Panc1 (cell line): ENCODE measurements at regions of chr12 and their contacts with region 1.

Region 1: DNA sequence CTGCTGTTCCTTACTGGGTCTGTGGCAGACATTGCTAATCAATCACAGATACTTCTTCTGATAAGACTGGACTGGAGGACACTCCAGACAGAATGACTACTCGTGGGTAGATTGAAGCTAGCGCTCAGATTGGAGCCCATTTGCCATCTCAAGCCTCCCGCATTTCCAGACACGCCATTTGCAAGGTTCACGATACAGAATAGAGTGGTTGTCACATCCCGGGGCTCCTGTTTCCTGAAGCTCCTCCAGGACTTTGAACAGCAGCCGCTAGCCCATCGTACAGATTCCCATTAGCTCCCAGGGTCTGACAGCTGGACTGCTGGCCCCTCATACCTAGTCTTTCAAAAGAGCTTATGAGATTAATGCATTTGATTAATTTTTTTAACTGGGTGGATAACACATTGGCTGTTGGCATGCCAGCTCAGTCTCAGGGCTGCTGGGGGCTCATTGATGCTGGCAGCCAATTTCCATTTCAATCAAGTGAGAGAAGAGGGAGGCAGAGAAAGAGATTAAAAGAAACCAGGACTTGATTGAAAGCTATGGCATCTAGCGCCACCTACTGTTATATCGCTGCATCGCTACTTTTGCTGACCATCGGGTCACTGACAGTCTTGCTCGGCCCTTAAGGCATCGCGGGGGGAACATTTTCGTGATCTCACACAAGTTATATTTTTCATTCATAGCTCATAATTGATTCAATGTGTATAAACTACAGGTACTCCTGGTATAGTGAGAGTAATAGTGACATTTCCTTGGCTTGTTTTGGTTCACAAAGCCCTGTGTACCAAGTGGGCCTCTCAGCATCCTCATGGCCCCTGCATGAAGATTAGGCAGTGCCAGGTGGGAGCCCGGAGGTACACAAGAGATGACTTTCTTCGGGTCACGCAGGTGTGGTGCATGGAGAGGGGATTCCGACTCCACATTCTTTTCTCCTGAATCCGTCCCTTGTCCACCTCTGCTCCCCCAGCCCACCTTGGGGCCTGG is 78.6 kb downstream of the CCDC60 start:
- DNase-seq: peak; percentile 61
- ATAC-seq: peak; percentile 90
- H3K4me3 ChIP-seq: no peak overlapping the region
- H3K27ac ChIP-seq: no peak overlapping the region
- H3K4me1 ChIP-seq: no peaks in the 10 kb centered on the region
- H3K27me3 ChIP-seq: peaks cover 8% of the 10 kb centered on the region; the same call in 1 of the 2 replicates
- CTCF ChIP-seq: peak; percentile 93

Region 2: GRCh38 chr12:118979763-118980406 is 433.2 kb before region 1 on chr12:
- CTCF ChIA-PET with region 1: no interaction called
- POLR2A ChIA-PET with region 1: no interaction called
- in situ Hi-C with region 1: no loop called
- intact Hi-C with region 1: loop called (anchors 10 kb)
- DNase-seq: peak; percentile 20
- ATAC-seq: peak; percentile 76; the same call in 1 of the 2 replicates
- H3K4me3 ChIP-seq: no peak overlapping the region
- H3K27ac ChIP-seq: no peak overlapping the region
- H3K4me1 ChIP-seq: no peaks in the 10 kb centered on the region
- H3K27me3 ChIP-seq: no peaks in the 10 kb centered on the region; the same call in 1 of the 2 replicates
- CTCF ChIP-seq: peak; percentile 88

Region 3: GRCh38 chr12:119115296-119115905 is 297.7 kb before region 1 on chr12:
- CTCF ChIA-PET with region 1: interaction called, 4 read pairs
- POLR2A ChIA-PET with region 1: no interaction called
- in situ Hi-C with region 1: no loop called
- intact Hi-C with region 1: loop called (anchors 2 kb)
- DNase-seq: peak; percentile 35
- ATAC-seq: 0 out of 2 replicates have a peak, but pooled peaks have one; percentile 56
- H3K4me3 ChIP-seq: no peak overlapping the region
- H3K27ac ChIP-seq: no peak overlapping the region
- H3K4me1 ChIP-seq: no peaks in the 10 kb centered on the region
- H3K27me3 ChIP-seq: no peaks in the 10 kb centered on the region; the same call in 1 of the 2 replicates
- CTCF ChIP-seq: peak; percentile 93

Region 4: DNA sequence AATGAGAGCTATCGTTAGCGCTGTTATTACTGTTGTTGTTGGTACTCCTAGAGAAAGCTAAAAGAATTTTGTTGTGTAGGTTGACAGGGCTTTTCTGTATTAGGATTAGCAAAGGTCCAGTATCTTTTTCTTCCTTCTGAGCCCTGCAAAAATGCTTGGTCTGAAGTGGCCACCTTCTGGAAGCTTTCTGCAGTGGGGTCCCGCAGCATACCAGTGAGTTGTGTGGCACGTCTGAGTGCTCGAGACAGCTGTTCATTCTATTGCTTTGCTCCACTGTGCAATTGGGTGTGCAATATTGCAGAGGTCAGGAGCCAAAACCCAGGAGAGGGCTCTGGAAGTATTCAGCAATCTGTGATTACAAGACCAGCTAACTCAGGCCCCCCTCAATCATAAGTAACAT is 21.4 kb before region 1 on chr12:
- CTCF ChIA-PET with region 1: no interaction called
- POLR2A ChIA-PET with region 1: no interaction called
- in situ Hi-C with region 1: no loop called
- intact Hi-C with region 1: no loop called
- DNase-seq: no peak
- ATAC-seq: no peak
- H3K4me3 ChIP-seq: no peak overlapping the region
- H3K27ac ChIP-seq: no peak overlapping the region
- H3K4me1 ChIP-seq: no peaks in the 10 kb centered on the region
- H3K27me3 ChIP-seq: peaks cover 5% of the 10 kb centered on the region; the same call in 1 of the 2 replicates
- CTCF ChIP-seq: no peak

Region 5: DNA sequence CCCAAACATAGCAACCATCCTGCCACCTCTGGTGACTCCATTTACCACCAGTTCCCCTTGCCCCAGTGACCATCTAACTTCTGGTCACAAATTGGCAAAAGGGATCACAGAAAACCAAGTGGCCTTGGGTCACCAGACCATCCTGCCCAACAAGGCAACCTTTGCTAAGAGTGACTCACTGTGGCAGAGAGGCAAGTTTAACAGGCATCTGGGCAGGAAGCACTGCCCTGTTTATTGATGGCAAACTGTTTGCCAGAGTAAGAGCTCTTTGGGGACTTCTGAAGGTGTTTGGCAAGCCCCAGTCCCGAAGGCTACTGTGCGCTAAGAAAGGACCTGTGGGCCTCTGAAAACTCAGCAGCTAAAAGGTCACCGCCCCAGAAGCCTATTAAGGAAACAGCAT is 152.3 kb after region 1 on chr12:
- CTCF ChIA-PET with region 1: no interaction called
- POLR2A ChIA-PET with region 1: no interaction called
- in situ Hi-C with region 1: no loop called
- intact Hi-C with region 1: no loop called
- DNase-seq: no peak
- ATAC-seq: no peak
- H3K4me3 ChIP-seq: no peak overlapping the region
- H3K27ac ChIP-seq: no peak overlapping the region
- H3K4me1 ChIP-seq: no peaks in the 10 kb centered on the region
- H3K27me3 ChIP-seq: no peaks in the 10 kb centered on the region
- CTCF ChIP-seq: no peak